ENCODE measurements at regions of chr10 and their contacts with region 1.

Region 1: DNA sequence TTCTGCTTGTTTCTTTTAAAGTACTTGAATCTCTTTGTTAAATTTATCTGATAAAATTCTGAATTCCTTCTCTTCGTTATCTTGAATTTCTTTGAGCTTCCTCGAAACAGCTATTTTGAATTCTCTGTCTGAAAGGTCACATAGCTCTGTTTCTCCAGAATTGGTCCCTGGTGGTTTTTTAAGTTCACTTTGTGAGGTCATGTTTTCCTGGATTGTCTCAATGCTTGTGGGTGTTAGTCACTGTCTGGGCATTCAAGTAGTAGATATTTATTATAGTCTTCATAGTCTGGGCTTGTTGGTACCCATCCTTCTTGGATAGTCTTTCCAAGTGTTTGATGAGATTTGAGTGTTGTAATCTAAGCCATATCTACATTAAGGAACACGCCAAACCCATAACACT is 1060.6 kb downstream of the LRMDA start:
- DNase-seq: no peak
- ATAC-seq: peak in 1 of 8 donors; percentile 18
- H3K4me3 ChIP-seq: no peak overlapping the region
- H3K27ac ChIP-seq: no peak overlapping the region
- H3K4me1 ChIP-seq: no peaks in the 10 kb centered on the region
- H3K27me3 ChIP-seq: no peaks in the 10 kb centered on the region
- CTCF ChIP-seq: no peak

Region 2: GRCh38 chr10:76444034-76444800 is 47.8 kb before region 1 on chr10:
- intact Hi-C with region 1: loop called in 1 of 10 experiments (anchors 2 kb)
- DNase-seq: no peak
- ATAC-seq: peak in 7 of 8 donors; percentile 56 to 94 (median 79)
- H3K4me3 ChIP-seq: no peak overlapping the region
- H3K27ac ChIP-seq: peak overlapping the region in 6 of 10 donors; percentile 12 to 73 (median 33)
- H3K4me1 ChIP-seq: peaks cover 0 to 27% (median 20%) of the 10 kb centered on the region in 9 donors
- H3K27me3 ChIP-seq: no peaks in the 10 kb centered on the region
- CTCF ChIP-seq: no peak

Measured in heart right ventricle (tissue), 16 donors.